Activated CD8-positive, alpha-beta memory T cell treated with anti-CD3 and anti-CD28 coated beads, Interleukin-2, amount 10 ng/mL, durations not matched to agents 7 days and 5 days (primary cell): ENCODE measurements at regions of chr10 and their contacts with region 1.

Region 1: DNA sequence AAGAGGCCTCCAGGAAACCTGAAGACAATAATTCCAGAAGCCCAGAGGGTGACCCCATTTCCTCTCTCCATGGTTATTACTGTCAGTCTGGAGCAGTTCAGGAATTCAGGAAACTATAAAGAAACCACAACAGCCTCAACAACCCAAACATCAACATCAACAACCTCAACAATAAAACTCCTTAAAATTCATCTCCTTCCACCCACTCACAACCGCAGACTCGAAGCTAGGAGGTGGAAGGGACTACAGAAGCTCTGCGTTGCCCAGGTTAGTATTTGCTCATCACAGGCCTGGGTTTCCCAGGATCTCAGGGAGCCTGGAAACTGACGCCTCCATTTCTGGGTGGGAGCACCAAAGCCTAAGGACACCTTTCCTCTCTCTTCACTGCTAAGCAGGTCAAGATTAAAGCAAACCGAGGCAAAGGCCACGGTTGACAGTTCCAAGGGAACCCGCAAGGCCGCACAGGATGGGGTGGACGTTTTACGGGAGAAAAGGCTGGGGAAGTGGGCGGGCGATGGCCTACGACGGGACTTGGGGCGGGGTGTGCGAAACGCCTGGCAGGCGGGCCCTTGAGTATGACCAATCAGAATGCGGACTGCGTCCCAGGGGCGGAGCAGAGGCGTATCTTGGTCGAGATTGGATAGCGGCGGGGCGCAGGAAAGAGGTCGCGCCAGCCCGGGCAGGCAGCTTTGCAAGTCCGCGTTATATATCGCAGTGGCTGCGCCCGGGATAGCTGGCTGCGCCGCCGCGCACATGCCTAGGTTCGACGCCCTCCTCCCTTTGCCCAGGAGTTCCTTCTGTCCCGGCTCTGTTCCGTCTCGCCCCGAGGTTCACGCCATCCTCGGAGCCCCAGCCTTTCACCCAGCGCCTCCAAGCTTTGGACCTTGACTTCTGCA is at the start of gene ELOVL3:
- DNase-seq: peak; percentile 94
- ATAC-seq: peak; percentile 96
- H3K4me3 Mint-ChIP-seq: peak within 1 kb of the TSS; percentile 59
- H3K27ac Mint-ChIP-seq: no peak within 1 kb of the TSS
- H3K4me1 Mint-ChIP-seq: peaks cover 19% of the 10 kb centered on the region
- H3K27me3 Mint-ChIP-seq: peaks cover 73% of the 10 kb centered on the region
- total RNA-seq, gene ELOVL3: not detected

Region 2: DNA sequence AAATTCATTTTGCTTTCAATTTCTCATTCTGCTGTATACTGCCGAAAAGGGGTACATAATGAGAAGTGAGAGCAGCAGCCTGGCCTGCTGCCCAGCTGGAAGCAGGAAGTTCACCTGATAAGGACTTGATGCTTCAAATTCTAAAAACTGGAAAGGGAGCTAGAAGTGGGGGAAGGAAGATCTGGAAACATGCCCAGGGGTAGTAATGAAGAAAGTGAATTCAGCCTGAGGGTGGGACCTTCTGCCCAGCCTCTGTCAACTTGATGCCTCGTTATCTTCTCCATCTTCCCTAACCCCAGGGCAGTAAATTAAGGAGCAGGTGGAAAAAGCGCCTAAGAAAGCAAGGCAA is 239.3 kb before region 1 on chr10:
- CTCF ChIA-PET with region 1: no interaction called
- DNase-seq: no peak
- ATAC-seq: no peak
- H3K4me3 Mint-ChIP-seq: no peak overlapping the region
- H3K27ac Mint-ChIP-seq: no peak overlapping the region
- H3K4me1 Mint-ChIP-seq: no peaks in the 10 kb centered on the region
- H3K27me3 Mint-ChIP-seq: no peaks in the 10 kb centered on the region

Region 3: DNA sequence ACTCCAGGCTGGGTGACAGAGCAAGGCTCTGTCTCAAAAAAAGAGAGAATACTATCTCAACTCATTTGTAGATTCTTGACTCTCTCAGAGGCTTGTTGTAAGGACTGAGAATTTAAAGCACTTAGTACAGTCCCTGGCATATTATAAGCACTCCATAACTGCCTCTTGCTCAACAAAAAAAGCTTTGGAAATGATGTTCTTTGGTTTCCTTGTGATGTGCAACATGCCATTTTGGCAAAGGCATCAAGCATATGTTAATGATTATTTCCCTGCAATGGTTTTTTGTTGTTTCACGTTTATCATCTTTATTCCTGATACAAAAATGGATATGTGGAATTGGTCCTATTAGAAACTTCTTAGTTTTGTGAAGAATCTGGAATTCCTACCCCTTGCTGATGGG is 58.0 kb before region 1 on chr10:
- CTCF ChIA-PET with region 1: interaction called, 169 read pairs
- DNase-seq: no peak
- ATAC-seq: no peak
- H3K4me3 Mint-ChIP-seq: no peak overlapping the region
- H3K27ac Mint-ChIP-seq: no peak overlapping the region
- H3K4me1 Mint-ChIP-seq: peaks cover 15% of the 10 kb centered on the region
- H3K27me3 Mint-ChIP-seq: no peaks in the 10 kb centered on the region

Region 4: GRCh38 chr10:102254426-102254825 is 28.5 kb after region 1 on chr10:
- CTCF ChIA-PET with region 1: interaction called, 45 read pairs
- DNase-seq: no peak
- ATAC-seq: no peak
- H3K4me3 Mint-ChIP-seq: no peak overlapping the region
- H3K27ac Mint-ChIP-seq: no peak overlapping the region
- H3K4me1 Mint-ChIP-seq: peaks cover 2% of the 10 kb centered on the region
- H3K27me3 Mint-ChIP-seq: no peaks in the 10 kb centered on the region

Region 5: GRCh38 chr10:102322914-102323313 is 97.0 kb after region 1 on chr10:
- CTCF ChIA-PET with region 1: interaction called, 16 read pairs
- DNase-seq: peak; percentile 85
- ATAC-seq: peak; percentile 82
- H3K4me3 Mint-ChIP-seq: no peak overlapping the region
- H3K27ac Mint-ChIP-seq: no peak overlapping the region
- H3K4me1 Mint-ChIP-seq: peaks cover 21% of the 10 kb centered on the region
- H3K27me3 Mint-ChIP-seq: no peaks in the 10 kb centered on the region

Region 6: GRCh38 chr10:102384053-102384452 is 158.2 kb after region 1 on chr10:
- CTCF ChIA-PET with region 1: interaction called, 44 read pairs
- DNase-seq: no peak
- ATAC-seq: no peak
- H3K4me3 Mint-ChIP-seq: no peak overlapping the region
- H3K27ac Mint-ChIP-seq: no peak overlapping the region
- H3K4me1 Mint-ChIP-seq: no peaks in the 10 kb centered on the region
- H3K27me3 Mint-ChIP-seq: no peaks in the 10 kb centered on the region

Region 7: DNA sequence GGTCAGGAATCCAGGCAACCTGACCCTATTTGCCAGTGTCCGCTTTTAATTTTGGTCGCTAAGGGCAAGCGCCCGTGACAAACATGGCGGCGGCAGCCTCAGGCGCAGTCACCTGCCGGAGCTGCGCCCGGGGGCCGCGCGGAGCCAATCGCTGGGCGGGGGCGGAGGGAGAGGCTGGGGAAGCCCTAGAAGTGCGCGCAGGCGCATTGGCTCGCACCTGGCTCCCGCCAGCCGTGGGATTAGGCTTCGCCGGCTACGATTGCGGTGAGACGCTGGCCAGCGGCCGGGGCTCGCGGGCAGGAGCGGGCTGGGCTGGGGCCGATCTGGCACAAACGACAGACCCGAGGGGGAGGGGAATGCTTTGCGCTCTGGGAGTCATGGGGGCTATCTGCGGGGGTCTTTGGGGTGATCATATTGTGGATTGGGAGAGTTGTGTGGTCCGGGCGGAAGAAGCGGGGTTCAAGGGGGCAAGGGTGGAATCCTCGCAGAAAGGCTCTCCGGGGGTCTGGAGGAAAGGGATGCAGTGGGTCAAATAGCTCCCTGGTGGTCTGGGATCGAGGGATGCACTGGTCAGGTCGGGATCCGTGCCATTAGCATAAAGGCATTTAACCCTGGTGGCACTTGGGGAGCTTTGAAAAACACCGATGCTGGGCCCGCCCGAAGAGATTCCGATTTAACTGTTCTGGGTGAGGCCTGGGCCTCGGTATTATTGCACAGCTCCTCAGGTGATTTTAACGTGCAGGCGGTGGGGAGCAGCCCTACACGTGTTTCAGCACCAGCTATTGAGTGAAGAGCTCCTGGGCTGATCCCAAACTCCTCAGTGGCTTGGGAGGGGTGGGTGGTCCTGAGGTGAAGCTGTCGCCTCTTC is 235.5 kb after region 1 on chr10:
- CTCF ChIA-PET with region 1: interaction called, 12 read pairs
- DNase-seq: peak; percentile 94
- ATAC-seq: peak; percentile 99
- H3K4me3 Mint-ChIP-seq: peak overlapping the region; percentile 82
- H3K27ac Mint-ChIP-seq: peak overlapping the region; percentile 79
- H3K4me1 Mint-ChIP-seq: peaks cover 29% of the 10 kb centered on the region
- H3K27me3 Mint-ChIP-seq: no peaks in the 10 kb centered on the region

Region 8: DNA sequence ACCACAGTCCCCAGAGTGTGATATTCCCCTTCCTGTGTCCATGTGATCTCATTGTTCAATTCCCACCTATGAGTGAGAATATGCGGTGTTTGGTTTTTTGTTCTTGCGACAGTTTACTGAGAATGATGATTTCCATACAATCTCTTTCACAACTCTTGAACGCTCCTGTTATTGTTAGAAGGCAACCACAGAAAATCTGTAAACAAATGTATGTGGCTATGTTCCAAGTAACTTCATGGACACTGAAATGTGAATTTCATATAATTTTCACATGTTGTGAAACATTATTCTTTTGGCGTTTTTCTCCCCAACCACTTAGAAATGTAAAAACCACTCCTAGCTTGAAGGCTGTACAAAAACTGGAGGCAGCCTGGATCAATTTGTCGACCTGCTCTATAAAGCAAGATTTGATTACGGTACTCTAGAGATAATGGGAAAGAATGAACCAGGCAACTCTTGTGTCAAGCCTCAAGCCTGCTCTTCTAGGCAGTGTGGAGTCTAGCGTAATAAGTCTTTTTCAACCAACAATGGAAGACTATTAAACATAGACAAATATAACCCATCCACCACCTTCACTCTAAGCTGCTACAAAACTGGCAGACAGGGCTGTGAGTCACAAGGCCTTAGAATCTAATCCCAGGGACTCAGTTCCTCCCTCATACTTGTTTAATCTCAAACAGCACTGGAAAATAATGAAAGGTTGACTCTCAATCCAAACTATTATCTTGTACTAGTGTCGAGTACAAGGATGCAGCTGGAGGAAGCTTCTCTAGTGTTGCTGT is 465.6 kb after region 1 on chr10:
- CTCF ChIA-PET with region 1: no interaction called
- DNase-seq: no peak
- ATAC-seq: no peak
- H3K4me3 Mint-ChIP-seq: no peak overlapping the region
- H3K27ac Mint-ChIP-seq: no peak overlapping the region
- H3K4me1 Mint-ChIP-seq: no peaks in the 10 kb centered on the region
- H3K27me3 Mint-ChIP-seq: no peaks in the 10 kb centered on the region